AG04450 (cell line): ENCODE measurements at regions of chr15 and their contacts with region 1.

Region 1: GRCh38 chr15:96924570-96924969 is 594.1 kb downstream of the NR2F2 start:
- DNase-seq: no peak
- H3K4me3 ChIP-seq: no peak overlapping the region
- H3K27ac ChIP-seq: no peak overlapping the region
- H3K27me3 ChIP-seq: no peaks in the 10 kb centered on the region
- CTCF ChIP-seq: no peak

Region 2: GRCh38 chr15:96321639-96322535 is 602.7 kb before region 1 on chr15:
- CTCF ChIA-PET with region 1: no interaction called
- POLR2A ChIA-PET with region 1: interaction called, 11 read pairs
- DNase-seq: no peak
- H3K4me3 ChIP-seq: peak overlapping the region; percentile 48
- H3K27ac ChIP-seq: peak overlapping the region; percentile 61
- H3K27me3 ChIP-seq: no peaks in the 10 kb centered on the region
- CTCF ChIP-seq: no peak; the same call in 1 of the 2 replicates